Mucosa of descending colon (tissue), 3 donors: ENCODE measurements at regions of chrX and their contacts with region 1.

Region 1: GRCh38 chrX:65451663-65452062 is 82.9 kb downstream of the LAS1L start:
- DNase-seq: peak in 1 of 3 donors; percentile 63
- ATAC-seq: peak; percentile 62
- H3K4me3 ChIP-seq: no peak overlapping the region
- H3K4me1 ChIP-seq: no peaks in the 10 kb centered on the region
- CTCF ChIP-seq: no peak

Region 2: GRCh38 chrX:65407157-65407626 is 44.5 kb before region 1 on chrX:
- intact Hi-C with region 1: no loop called
- DNase-seq: peak in 2 of 3 donors; percentile 1 to 28
- ATAC-seq: peak; percentile 82
- H3K4me3 ChIP-seq: no peak overlapping the region
- H3K4me1 ChIP-seq: no peaks in the 10 kb centered on the region
- CTCF ChIP-seq: no peak

Region 3: GRCh38 chrX:65502618-65503017 is 51.0 kb after region 1 on chrX:
- intact Hi-C with region 1: loop called in 1 of 2 experiments (anchors 10 kb)
- DNase-seq: no peak
- ATAC-seq: no peak
- H3K4me3 ChIP-seq: no peak overlapping the region
- H3K4me1 ChIP-seq: no peaks in the 10 kb centered on the region
- CTCF ChIP-seq: no peak

Region 4: DNA sequence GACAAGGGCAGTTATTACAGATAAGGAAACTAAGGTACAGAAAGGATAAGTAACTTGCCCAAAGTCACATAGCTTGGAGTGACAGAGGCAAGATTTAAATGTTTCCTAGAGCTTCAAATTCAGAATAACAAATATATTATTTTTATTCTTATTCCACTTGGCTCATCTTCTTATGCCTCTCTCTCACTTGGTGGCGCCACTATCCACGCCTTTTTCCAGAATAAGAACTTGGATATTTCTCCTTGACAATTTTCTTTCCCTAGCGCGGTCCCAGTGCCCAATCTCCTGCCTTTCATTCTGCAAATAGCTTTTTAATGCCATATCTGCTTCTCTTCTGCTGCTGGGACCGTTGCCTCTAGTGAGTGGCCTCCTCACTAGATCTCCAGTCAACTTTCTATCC is 294.3 kb after region 1 on chrX:
- intact Hi-C with region 1: no loop called
- DNase-seq: peak in 1 of 3 donors; percentile 43
- ATAC-seq: peak; percentile 31
- H3K4me3 ChIP-seq: no peak overlapping the region
- H3K4me1 ChIP-seq: no peaks in the 10 kb centered on the region
- CTCF ChIP-seq: no peak